Psoas muscle (tissue), 8 donors: ENCODE measurements at regions of chr6 and their contacts with region 1.

Region 1: GRCh38 chr6:159134701-159135364 is 34.4 kb upstream of the FNDC1 start:
- DNase-seq: peak; percentile 55 to 66
- ATAC-seq: peak; percentile 82 to 93 (median 92)
- H3K4me3 ChIP-seq: no peak overlapping the region
- H3K27ac ChIP-seq: no peak overlapping the region
- H3K4me1 ChIP-seq: no peaks in the 10 kb centered on the region
- H3K27me3 ChIP-seq: no peaks in the 10 kb centered on the region
- CTCF ChIP-seq: peak; percentile 93

Region 2: GRCh38 chr6:158704181-158704822 is 430.5 kb before region 1 on chr6:
- intact Hi-C with region 1: loop called in 1 of 2 experiments (anchors 10 kb)
- DNase-seq: peak; percentile 86 to 91
- ATAC-seq: peak; percentile 86 to 91 (median 90)
- H3K4me3 ChIP-seq: peak overlapping the region; percentile 61
- H3K27ac ChIP-seq: no peak overlapping the region
- H3K4me1 ChIP-seq: peaks cover 26% of the 10 kb centered on the region
- H3K27me3 ChIP-seq: no peaks in the 10 kb centered on the region
- CTCF ChIP-seq: peak; percentile 91

Region 3: DNA sequence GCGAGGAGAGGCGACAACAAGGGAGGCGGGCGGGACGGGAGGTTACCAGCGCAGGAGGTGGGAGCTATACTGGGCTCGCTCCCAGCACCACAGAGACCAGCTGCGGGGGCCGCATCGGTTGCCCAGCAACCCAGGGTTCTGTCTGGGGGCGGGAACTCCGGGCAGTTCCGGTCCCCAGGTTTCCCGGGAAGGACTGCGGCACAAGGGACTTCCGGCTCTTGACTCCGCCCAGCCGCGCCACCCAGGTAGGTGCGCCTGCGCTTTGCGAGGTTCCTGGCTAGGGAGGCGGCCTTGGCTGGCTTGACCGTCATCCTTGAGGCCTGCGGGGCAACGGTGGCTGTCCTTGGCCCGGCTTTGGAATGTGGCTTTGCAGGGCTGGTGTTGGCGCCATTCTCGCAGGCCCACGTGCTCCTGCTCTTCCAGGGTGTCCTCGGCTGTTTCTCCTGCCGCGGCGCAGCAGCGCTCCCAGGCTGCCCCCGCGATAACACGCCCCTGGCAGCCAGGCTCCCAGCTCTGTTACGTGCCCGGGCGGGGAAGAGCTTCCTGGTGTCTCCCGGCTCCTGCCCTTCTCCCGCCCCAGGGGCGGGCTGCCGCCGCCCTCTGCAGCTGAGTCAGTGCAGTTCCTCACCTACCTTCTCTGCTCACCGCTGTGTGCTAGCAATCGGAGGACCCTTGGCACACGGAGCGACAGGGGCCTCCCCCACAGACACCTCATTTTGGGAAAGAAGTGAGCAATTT is 135.0 kb before region 1 on chr6 and contains the start of gene RSPH3:
- intact Hi-C with region 1: loop called in 1 of 2 experiments (anchors 10 kb)
- DNase-seq: peak; percentile 93 to 97
- ATAC-seq: peak; percentile 93 to 96 (median 94)
- H3K4me3 ChIP-seq: peak within 1 kb of the TSS; percentile 83
- H3K27ac ChIP-seq: peak within 1 kb of the TSS; percentile 81
- H3K4me1 ChIP-seq: peaks cover 13% of the 10 kb centered on the region
- H3K27me3 ChIP-seq: no peaks in the 10 kb centered on the region
- CTCF ChIP-seq: peak; percentile 11
- total RNA-seq, gene RSPH3: 2.7 to 5.2 (median 4.0) TPM

Region 4: GRCh38 chr6:159042003-159042825 is 92.6 kb before region 1 on chr6:
- intact Hi-C with region 1: loop called (anchors 1 to 2 kb)
- DNase-seq: peak; percentile 35 to 65
- ATAC-seq: peak; percentile 72 to 93 (median 85)
- H3K4me3 ChIP-seq: peak overlapping the region; percentile 24
- H3K27ac ChIP-seq: no peak overlapping the region
- H3K4me1 ChIP-seq: no peaks in the 10 kb centered on the region
- H3K27me3 ChIP-seq: peaks cover 0 to 7% (median 2%) of the 10 kb centered on the region in 3 donors
- CTCF ChIP-seq: peak; percentile 94

Region 5: DNA sequence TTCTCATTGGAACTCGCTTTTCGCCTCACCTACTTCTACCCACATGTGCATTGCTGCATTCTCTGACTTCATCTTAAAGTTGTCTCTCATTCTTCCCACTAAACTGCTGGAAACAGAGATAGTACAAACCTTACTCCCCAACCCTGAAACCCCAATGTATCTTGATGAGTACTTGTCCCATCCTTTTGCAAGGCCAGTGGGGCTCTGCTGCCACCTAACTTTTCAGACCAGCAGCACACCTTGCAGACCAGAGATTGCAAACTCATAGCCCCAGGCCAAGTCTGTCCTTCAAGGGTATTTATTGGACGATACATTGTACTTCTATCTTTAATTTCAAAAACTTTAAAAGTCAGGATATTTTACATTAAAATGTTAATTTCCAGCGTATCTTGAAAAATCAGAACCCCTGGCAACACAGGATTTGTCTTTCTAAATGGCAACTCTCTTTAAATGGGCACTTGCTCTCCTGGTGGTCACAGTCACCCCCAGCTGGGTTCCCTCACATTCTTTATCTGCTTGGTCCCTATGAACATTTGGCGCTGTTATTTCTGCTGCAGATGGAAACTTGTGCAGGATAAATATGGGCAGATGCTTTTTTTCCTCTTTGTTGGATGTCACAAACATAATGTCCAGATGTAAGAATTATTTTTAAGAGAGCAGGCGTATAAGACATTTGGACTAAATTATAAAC is 474.3 kb after region 1 on chr6:
- intact Hi-C with region 1: no loop called
- DNase-seq: no peak
- ATAC-seq: peak in 3 of 4 donors; percentile 29 to 32 (median 31)
- H3K4me3 ChIP-seq: no peak overlapping the region
- H3K27ac ChIP-seq: no peak overlapping the region
- H3K4me1 ChIP-seq: no peaks in the 10 kb centered on the region
- H3K27me3 ChIP-seq: no peaks in the 10 kb centered on the region
- CTCF ChIP-seq: no peak